ENCODE measurements at regions of chr6 and their contacts with region 1.

Region 1: DNA sequence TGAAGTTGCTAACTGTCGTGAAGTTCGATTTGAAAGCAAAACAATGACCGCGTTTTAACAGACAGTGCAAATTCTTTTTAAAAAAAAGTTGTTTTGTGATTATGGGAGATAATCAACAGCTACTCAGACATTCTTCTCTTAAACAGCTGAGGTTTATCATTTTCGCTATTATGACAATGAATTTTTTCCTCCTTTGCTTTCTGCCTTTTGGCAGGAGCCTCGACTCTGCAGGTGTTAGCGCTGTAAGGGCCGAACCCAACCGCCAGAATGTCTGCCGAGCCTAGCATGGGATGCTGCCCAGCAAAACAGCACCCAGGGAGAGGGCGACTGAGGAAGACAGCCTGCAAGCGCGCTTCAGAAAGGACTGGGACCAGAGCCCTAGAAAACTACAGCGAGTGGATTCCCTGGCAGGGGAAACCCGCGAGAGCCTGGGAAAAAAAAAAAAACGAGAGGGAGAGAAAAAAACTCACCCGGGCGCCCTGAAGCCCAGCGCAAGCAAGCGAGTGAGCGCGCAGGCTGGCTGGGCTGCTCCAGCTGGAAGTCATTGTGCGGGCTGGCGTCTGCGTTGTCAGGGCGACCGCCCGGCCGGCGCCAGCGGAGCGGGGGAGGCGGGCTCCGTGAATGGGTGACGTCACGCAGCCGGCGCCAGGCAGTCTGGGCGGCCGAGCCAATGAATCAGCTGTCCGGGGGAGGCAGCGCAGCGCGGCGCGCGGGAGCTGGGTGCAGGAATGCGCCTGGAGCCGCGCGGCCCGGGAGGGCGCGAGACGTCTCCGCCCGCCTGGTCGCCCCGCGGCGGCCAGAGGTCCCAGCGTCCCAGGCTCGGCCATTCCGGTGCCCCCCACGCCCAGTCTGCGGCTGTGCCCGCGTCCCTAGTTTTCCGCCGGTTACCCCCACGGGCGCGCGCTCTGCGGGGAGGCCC is 32.7 kb upstream of the ID4 start:
- DNase-seq: peak; percentile 97
- H3K4me3 ChIP-seq: peak overlapping the region; percentile 61
- H3K27ac ChIP-seq: peak overlapping the region; percentile 98
- H3K4me1 ChIP-seq: peaks cover 30% of the 10 kb centered on the region
- H3K27me3 ChIP-seq: no peaks in the 10 kb centered on the region
- CTCF ChIP-seq: no peak

Region 2: GRCh38 chr6:19655744-19656143 is 148.7 kb before region 1 on chr6:
- CTCF ChIA-PET with region 1: no interaction called
- POLR2A ChIA-PET with region 1: no interaction called
- intact Hi-C with region 1: loop called (anchors 5 kb)
- DNase-seq: peak; percentile 39
- H3K4me3 ChIP-seq: peak overlapping the region; percentile 38
- H3K27ac ChIP-seq: no peak overlapping the region
- H3K4me1 ChIP-seq: no peaks in the 10 kb centered on the region
- H3K27me3 ChIP-seq: no peaks in the 10 kb centered on the region
- CTCF ChIP-seq: no peak

Region 3: GRCh38 chr6:19836799-19837510 is 32.5 kb after region 1 on chr6 and contains the start of gene ID4:
- CTCF ChIA-PET with region 1: no interaction called
- POLR2A ChIA-PET with region 1: interaction called, 3 read pairs
- intact Hi-C with region 1: loop called (anchors 2 kb)
- DNase-seq: peak; percentile 99
- H3K4me3 ChIP-seq: peak within 1 kb of the TSS; percentile 84
- H3K27ac ChIP-seq: peak within 1 kb of the TSS; percentile 88
- H3K4me1 ChIP-seq: peaks cover 26% of the 10 kb centered on the region
- H3K27me3 ChIP-seq: no peaks in the 10 kb centered on the region
- CTCF ChIP-seq: no peak
- total RNA-seq, gene ID4: 29.3 and 30.5 TPM in 2 replicates